ENCODE measurements at regions of chr15 and their contacts with region 1.

Region 1: GRCh38 chr15:71411538-71412482 is 296.5 kb downstream of the THSD4 start:
- H3K4me3 ChIP-seq: no peak overlapping the region
- H3K27ac ChIP-seq: no peak overlapping the region
- H3K4me1 ChIP-seq: no peaks in the 10 kb centered on the region
- CTCF ChIP-seq: no peak

Region 2: GRCh38 chr15:71066983-71067382 is 344.8 kb before region 1 on chr15:
- CTCF ChIA-PET with region 1: interaction called, 10 read pairs
- POLR2A ChIA-PET with region 1: no interaction called
- H3K4me3 ChIP-seq: no peak overlapping the region
- H3K27ac ChIP-seq: no peak overlapping the region
- H3K4me1 ChIP-seq: no peaks in the 10 kb centered on the region
- CTCF ChIP-seq: no peak

Region 3: GRCh38 chr15:71374607-71375352 is 37.0 kb before region 1 on chr15:
- CTCF ChIA-PET with region 1: no interaction called
- POLR2A ChIA-PET with region 1: no interaction called
- H3K4me3 ChIP-seq: no peak overlapping the region
- H3K27ac ChIP-seq: no peak overlapping the region
- H3K4me1 ChIP-seq: no peaks in the 10 kb centered on the region
- CTCF ChIP-seq: no peak

Measured in HEK293 (cell line).